ENCODE measurements at regions of chr3 and their contacts with region 1.

Region 1: DNA sequence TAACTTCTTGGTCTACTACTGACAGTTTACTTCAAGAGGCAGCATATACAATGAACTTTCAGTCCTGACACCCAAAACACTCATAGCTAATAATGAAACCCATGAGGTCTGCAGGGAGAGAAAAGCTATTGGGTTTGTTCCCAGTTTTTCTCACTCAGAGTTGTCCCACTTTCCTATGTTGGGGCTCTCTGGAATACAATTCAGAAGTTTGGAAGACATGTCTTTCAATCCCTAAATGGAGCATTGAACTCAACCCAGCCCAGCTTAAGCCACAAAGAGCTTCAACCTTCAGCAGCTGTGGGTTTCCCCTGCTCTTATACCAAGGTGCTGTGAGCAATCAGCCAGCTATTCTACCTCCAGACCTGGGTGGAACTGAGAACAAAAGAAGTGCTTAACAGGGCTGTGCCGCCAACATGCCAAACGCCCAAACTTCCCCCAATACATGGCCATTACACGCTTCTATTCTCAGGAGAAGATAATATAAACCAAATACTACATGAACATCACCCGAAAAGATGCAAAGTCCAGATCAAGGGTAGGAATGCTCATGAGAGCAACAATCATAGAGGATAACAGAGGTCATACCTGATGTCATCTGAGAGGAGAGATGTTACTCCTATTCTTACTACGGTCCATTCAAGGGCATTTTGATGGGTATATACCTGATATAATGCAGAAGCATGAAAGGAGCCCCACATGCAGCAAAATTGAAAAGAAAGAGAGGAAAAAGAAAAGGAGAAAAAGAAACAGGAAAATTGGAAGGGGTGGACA is 131.2 kb upstream of the TGFBR2 start:
- DNase-seq: no peak
- ATAC-seq: no peak
- H3K4me3 ChIP-seq: no peak overlapping the region
- H3K27ac ChIP-seq: no peak overlapping the region
- H3K4me1 ChIP-seq: peaks cover 0 to 8% of the 10 kb centered on the region in 2 donors
- H3K27me3 ChIP-seq: no peaks in the 10 kb centered on the region
- CTCF ChIP-seq: no peak
- POLR2A ChIP-seq: no peak

Region 2: GRCh38 chr3:30302027-30302426 is 173.2 kb before region 1 on chr3:
- in situ Hi-C with region 1: no loop called
- intact Hi-C with region 1: loop called (anchors 10 kb)
- DNase-seq: no peak
- ATAC-seq: no peak
- H3K4me3 ChIP-seq: no peak overlapping the region
- H3K27ac ChIP-seq: no peak overlapping the region
- H3K4me1 ChIP-seq: peaks cover under 1% of the 10 kb centered on the region in 2 donors
- H3K27me3 ChIP-seq: no peaks in the 10 kb centered on the region
- CTCF ChIP-seq: no peak
- POLR2A ChIP-seq: no peak

Region 3: DNA sequence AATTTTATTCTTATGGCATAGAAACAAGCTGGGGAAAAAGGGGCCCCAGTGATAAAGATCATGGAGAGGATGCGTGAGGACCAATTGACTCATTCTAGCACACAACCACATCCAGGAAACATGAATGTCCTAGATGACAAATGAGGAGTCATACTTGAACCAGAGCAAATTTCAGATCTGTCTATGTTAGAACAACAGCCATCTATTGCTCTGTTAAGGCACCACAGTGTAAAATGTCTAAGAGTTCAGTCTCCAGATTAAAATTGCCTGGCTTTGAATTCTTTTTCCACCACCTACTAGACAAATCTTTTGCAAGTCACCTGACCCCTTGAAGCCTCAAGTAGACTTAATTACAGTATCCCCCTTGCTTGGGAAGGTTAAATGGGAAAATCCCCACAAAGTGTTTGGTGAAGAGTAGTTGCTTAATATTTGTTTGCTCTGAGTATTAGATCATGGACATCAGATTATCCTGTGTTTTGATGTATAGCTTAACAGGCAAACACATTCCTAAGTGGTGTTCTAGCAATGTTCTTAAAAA is 127.5 kb before region 1 on chr3:
- in situ Hi-C with region 1: no loop called
- intact Hi-C with region 1: no loop called
- DNase-seq: no peak
- ATAC-seq: no peak
- H3K4me3 ChIP-seq: no peak overlapping the region
- H3K27ac ChIP-seq: no peak overlapping the region
- H3K4me1 ChIP-seq: peaks cover 0 to 18% of the 10 kb centered on the region in 2 donors
- H3K27me3 ChIP-seq: no peaks in the 10 kb centered on the region
- CTCF ChIP-seq: no peak
- POLR2A ChIP-seq: no peak

Region 4: DNA sequence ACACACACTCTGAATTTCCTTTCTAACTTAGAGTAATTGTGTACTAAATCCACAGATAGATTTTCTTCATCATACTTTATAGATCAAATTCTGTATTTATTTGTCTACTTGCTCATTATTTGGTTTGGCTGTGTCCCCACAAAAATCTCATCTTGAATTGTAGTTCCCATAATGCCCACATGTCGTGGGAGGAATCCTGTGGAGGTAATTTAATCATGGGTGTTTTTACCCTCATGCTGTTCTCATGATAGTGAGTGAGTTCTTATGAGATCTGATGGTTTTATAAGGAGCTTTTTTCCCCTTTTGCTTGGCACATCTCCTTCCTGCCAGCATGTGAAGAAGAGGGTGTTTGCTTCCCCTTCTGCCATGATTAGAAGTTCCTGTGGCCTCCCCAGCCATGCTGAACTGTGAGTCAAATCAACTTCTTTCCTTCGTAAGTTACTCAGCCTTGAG is 67.1 kb before region 1 on chr3:
- in situ Hi-C with region 1: no loop called
- intact Hi-C with region 1: no loop called
- DNase-seq: no peak
- ATAC-seq: no peak
- H3K4me3 ChIP-seq: no peak overlapping the region
- H3K27ac ChIP-seq: no peak overlapping the region
- H3K4me1 ChIP-seq: no peaks in the 10 kb centered on the region
- H3K27me3 ChIP-seq: no peaks in the 10 kb centered on the region
- CTCF ChIP-seq: no peak
- POLR2A ChIP-seq: no peak

Region 5: GRCh38 chr3:30518181-30518864 is 43.1 kb after region 1 on chr3:
- in situ Hi-C with region 1: no loop called
- intact Hi-C with region 1: loop called (anchors 2 kb)
- DNase-seq: peak; percentile 43 to 49
- ATAC-seq: peak; percentile 90 to 92
- H3K4me3 ChIP-seq: no peak overlapping the region
- H3K27ac ChIP-seq: peak overlapping the region; percentile 50 to 71 (median 60)
- H3K4me1 ChIP-seq: peaks cover 18 to 21% of the 10 kb centered on the region in 2 donors
- H3K27me3 ChIP-seq: no peaks in the 10 kb centered on the region
- CTCF ChIP-seq: peak in 1 of 5 experiments; percentile 16
- POLR2A ChIP-seq: no peak

Measured in gastrocnemius medialis (tissue), 4 donors.